ENCODE measurements at regions of chr20 and their contacts with region 1.

Region 1: DNA sequence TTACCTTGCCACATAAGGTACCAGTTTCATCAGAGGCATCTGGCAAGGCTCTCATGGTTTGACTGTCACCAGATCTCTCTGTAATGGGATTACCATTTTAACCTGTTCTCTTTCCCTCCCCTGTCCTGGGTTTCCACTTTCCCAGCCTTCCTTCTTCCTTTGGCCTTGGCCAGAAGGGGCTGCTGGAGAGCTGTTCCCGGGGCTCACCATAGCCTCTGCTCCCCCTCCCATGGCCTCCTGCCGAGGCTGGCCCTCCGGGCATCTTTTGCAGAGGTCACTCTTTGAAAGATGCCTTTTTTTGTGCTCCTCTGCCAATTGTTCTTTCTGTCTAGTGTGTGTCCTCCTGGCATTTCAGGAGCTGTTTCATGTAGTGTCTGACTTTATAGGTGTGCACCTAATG is 100.7 kb upstream of the SCP2D1 start:
- DNase-seq: no peak
- ATAC-seq: no peak
- H3K4me3 ChIP-seq: no peak overlapping the region
- H3K27ac ChIP-seq: no peak overlapping the region
- H3K4me1 ChIP-seq: no peaks in the 10 kb centered on the region
- H3K27me3 ChIP-seq: no peaks in the 10 kb centered on the region

Region 2: GRCh38 chr20:18639501-18639979 is 73.3 kb before region 1 on chr20:
- intact Hi-C with region 1: no loop called
- DNase-seq: no peak
- ATAC-seq: no peak
- H3K4me3 ChIP-seq: no peak overlapping the region
- H3K27ac ChIP-seq: no peak overlapping the region
- H3K4me1 ChIP-seq: no peaks in the 10 kb centered on the region
- H3K27me3 ChIP-seq: no peaks in the 10 kb centered on the region

Region 3: DNA sequence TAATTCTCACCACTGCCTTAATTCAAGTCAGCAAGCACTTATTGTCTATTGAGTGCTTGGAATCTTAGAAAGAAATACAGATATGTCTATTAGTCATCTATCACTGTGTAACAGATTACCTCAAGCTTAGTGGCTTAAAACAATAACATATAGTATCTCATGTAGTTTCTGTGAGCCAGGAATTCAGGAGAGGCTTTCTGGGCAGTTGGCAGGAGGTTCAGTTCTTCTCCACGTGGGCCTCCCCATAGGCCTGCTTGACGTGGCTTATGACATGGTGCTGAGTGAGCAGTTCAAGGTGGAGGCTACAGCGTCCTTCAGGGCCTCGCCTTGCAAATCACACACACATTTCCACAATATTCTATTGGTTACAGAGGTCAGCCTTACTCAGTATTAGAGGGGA is 55.3 kb before region 1 on chr20:
- intact Hi-C with region 1: no loop called
- DNase-seq: peak in 1 of 3 donors; percentile 28
- ATAC-seq: no peak
- H3K4me3 ChIP-seq: no peak overlapping the region
- H3K27ac ChIP-seq: no peak overlapping the region
- H3K4me1 ChIP-seq: no peaks in the 10 kb centered on the region
- H3K27me3 ChIP-seq: no peaks in the 10 kb centered on the region

Region 4: GRCh38 chr20:19074828-19075516 is 362.1 kb after region 1 on chr20:
- intact Hi-C with region 1: no loop called
- DNase-seq: peak in 1 of 3 donors; percentile 46
- ATAC-seq: no peak
- H3K4me3 ChIP-seq: no peak overlapping the region
- H3K27ac ChIP-seq: no peak overlapping the region
- H3K4me1 ChIP-seq: no peaks in the 10 kb centered on the region
- H3K27me3 ChIP-seq: no peaks in the 10 kb centered on the region

Region 5: DNA sequence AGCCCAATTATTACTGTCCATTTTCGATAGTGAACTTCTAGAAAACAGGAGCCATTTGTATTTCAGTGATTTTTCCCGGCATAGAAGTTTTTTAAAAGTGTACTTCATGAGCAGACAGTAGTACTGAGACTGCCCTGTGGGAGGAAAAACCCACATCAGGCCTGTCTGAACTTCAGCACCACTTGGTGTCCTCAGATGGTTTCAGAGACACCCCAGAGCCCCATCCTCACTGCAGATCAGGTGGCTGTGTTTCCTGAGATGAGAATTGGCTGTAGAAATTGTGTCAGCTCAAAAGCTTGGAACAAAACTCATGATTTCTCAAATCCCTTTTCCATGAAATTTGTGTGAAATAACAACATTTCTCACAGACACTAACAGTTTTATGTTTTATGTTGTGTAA is 935.1 kb after region 1 on chr20:
- intact Hi-C with region 1: loop called in 1 of 4 experiments (anchors 5 kb)
- DNase-seq: no peak
- ATAC-seq: no peak
- H3K4me3 ChIP-seq: no peak overlapping the region
- H3K27ac ChIP-seq: no peak overlapping the region
- H3K4me1 ChIP-seq: no peaks in the 10 kb centered on the region
- H3K27me3 ChIP-seq: no peaks in the 10 kb centered on the region

Measured in right cardiac atrium (tissue), 5 donors.